Left ventricle myocardium superior (tissue), 1 donor: ENCODE measurements at regions of chr6 and their contacts with region 1.

Region 1: GRCh38 chr6:53794720-53795253 is at the start of gene LRRC1:
- DNase-seq: peak; percentile 97
- ATAC-seq: peak; percentile 94
- total RNA-seq, gene LRRC1: 2.0 TPM

Region 2: GRCh38 chr6:53504512-53504911 is 290.3 kb before region 1 on chr6:
- intact Hi-C with region 1: no loop called
- DNase-seq: no peak
- ATAC-seq: no peak

Region 3: DNA sequence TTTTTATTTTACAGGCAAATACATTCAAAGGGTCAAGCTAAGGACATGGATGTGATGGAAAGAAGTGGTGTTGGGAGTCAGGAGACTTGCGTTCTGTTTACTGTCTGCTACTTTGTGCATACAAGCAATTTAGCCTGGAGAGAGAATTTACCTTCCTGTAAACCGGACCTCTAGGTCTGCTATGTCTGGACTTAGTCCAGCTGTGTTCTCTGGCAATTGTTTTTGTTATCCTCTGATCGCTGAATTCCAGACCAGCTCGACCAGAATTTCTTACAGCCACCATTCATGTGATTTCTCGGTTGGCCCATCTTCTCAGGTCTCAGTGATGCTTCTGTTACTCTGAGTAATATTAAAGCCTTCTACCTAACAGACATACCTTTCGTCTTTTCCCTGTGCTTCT is 75.2 kb after region 1 on chr6:
- intact Hi-C with region 1: no loop called
- DNase-seq: no peak
- ATAC-seq: no peak

Region 4: GRCh38 chr6:53956068-53956711 is 161.4 kb after region 1 on chr6:
- intact Hi-C with region 1: loop called (anchors 10 kb)
- DNase-seq: peak; percentile 76
- ATAC-seq: peak; percentile 98